ENCODE measurements at regions of chr5 and their contacts with region 1.

Region 1: GRCh38 chr5:73587923-73588322 is 22.4 kb downstream of the UTP15 start:
- DNase-seq: no peak
- H3K4me3 ChIP-seq: no peak overlapping the region
- H3K27ac ChIP-seq: no peak overlapping the region
- H3K4me1 ChIP-seq: no peaks in the 10 kb centered on the region
- H3K27me3 ChIP-seq: no peaks in the 10 kb centered on the region
- CTCF ChIP-seq: no peak
- POLR2A ChIP-seq: no peak

Region 2: DNA sequence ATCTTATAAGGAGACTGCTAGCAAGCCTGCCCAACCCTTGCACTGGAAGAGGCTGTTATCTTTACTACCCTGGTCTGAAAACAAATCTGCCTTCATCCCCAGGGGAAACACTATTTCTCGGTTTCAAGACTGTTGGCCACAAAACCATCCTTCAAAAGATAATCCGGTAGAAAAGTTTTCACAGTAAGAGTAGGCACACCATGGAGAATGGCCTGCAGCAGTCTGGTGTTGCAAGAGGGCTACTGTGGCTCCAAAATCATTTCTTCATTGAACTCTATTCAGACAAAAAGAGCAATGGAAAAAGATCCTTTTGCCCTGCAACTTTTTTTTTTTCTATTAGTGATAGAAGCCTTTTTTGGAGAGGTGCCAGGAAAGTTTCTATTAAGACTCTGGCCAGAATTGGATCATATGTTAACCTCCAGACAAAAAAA is 201.9 kb after region 1 on chr5:
- intact Hi-C with region 1: loop called (anchors 5 kb)
- DNase-seq: no peak
- H3K4me3 ChIP-seq: no peak overlapping the region
- H3K27ac ChIP-seq: no peak overlapping the region
- H3K4me1 ChIP-seq: no peaks in the 10 kb centered on the region
- H3K27me3 ChIP-seq: no peaks in the 10 kb centered on the region
- CTCF ChIP-seq: no peak
- POLR2A ChIP-seq: no peak

Measured in uterus (tissue), 4 donors.